Activated naive CD4-positive, alpha-beta T cell treated with anti-CD3 and anti-CD28 coated beads for 36 hours (primary cell): ENCODE measurements at regions of chr15 and their contacts with region 1.

Region 1: GRCh38 chr15:63212050-63213004 is 22.9 kb downstream of the RAB8B start:
- DNase-seq: peak; percentile 29
- H3K4me3 Mint-ChIP-seq: peak overlapping the region; percentile 57
- H3K27ac Mint-ChIP-seq: peak overlapping the region; percentile 97
- H3K4me1 Mint-ChIP-seq: peaks cover 89% of the 10 kb centered on the region
- H3K27me3 Mint-ChIP-seq: no peaks in the 10 kb centered on the region

Region 2: DNA sequence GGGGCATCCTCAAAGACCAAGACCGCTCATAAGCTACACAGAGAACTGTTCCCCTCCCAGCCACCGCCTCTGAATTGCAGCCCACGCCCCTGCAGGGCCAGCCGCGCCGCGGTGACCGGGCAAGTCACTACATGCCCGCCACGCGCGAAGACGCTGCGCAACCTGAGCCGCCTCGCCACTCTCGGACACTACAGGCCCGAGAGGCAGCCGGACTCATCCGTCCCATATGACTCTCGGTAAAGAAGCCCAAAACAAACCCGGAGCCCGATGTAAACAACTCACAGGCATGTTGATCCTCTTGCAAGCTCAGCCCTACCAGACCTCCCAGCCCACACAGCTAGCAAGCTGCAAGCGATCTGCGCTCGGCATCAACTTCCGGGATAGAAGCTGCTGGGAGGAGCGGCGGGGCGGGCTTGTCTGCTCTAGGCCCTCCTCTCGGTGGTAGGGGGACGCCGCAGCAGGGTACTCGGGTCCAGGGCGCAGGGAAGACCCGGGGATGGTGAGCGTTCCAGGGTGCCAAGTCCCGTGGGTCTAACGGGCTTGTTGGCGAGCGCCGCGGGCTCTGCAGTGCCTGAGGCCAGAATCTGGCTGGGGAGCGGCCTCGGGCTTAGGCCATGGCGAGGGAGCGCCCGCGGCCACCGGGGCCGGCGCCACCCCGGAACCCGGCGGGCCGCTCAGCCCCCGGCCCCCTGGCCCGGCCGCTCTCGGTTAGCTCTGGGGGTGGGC is 55.0 kb before region 1 on chr15 and contains the start of gene RPS27L:
- CTCF ChIA-PET with region 1: interaction called, 3 read pairs
- intact Hi-C with region 1: loop called (anchors 5 kb)
- DNase-seq: peak; percentile 93
- H3K4me3 Mint-ChIP-seq: peak within 1 kb of the TSS; percentile 99
- H3K27ac Mint-ChIP-seq: peak within 1 kb of the TSS; percentile 98
- H3K4me1 Mint-ChIP-seq: peaks cover 18% of the 10 kb centered on the region
- H3K27me3 Mint-ChIP-seq: no peaks in the 10 kb centered on the region
- total RNA-seq, gene RPS27L: 220 to 222 TPM

Region 3: GRCh38 chr15:63172376-63173109 is 39.8 kb before region 1 on chr15:
- CTCF ChIA-PET with region 1: no interaction called
- intact Hi-C with region 1: loop called (anchors 1 kb)
- DNase-seq: no peak
- H3K4me3 Mint-ChIP-seq: no peak overlapping the region
- H3K27ac Mint-ChIP-seq: no peak overlapping the region
- H3K4me1 Mint-ChIP-seq: peaks cover 14% of the 10 kb centered on the region
- H3K27me3 Mint-ChIP-seq: no peaks in the 10 kb centered on the region

Region 4: GRCh38 chr15:63232405-63232804 is 20.1 kb after region 1 on chr15:
- CTCF ChIA-PET with region 1: interaction called, 4 read pairs
- intact Hi-C with region 1: loop called (anchors 1 kb)
- DNase-seq: no peak
- H3K4me3 Mint-ChIP-seq: no peak overlapping the region
- H3K27ac Mint-ChIP-seq: peak overlapping the region; percentile 52
- H3K4me1 Mint-ChIP-seq: peaks cover 81% of the 10 kb centered on the region
- H3K27me3 Mint-ChIP-seq: no peaks in the 10 kb centered on the region

Region 5: DNA sequence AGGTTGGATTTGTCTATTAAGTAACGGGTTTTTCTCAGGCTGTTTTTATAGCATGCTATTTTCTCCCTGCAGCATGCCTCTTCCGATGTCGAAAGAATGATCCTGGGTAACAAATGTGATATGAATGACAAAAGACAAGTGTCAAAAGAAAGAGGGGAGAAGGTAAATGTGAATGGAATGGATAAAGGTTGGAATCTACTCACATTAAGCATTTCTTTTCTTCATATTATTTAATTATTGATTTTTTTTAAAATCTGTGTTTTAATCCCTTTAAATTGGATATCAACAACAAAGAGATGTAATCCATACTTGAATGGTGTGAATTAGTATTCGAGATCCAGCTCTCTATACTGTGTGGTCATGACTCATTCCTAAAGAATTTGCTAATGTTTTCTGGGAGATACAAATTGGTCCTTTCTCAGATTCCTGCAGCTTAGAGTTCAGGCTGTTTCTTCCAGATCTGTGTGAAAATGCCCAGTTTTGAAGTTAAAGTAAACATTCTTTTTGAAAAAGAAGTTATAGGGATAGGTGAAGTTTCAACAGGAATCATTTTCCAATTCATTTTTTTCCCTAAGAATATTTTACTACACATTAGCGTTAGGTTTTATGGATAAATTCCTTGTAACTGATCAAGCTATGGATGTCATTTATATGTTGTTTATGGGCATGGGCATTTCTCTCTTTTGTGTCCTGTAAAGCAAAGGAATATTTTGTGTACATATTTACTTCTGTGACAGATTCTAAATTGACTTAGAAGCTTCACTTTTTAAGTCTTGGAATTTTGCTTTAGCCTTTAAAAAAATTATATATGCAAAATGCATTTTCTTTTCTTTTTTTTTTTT is 44.3 kb after region 1 on chr15:
- CTCF ChIA-PET with region 1: no interaction called
- intact Hi-C with region 1: no loop called
- DNase-seq: no peak
- H3K4me3 Mint-ChIP-seq: no peak overlapping the region
- H3K27ac Mint-ChIP-seq: no peak overlapping the region
- H3K4me1 Mint-ChIP-seq: peaks cover 12% of the 10 kb centered on the region
- H3K27me3 Mint-ChIP-seq: no peaks in the 10 kb centered on the region

Region 6: DNA sequence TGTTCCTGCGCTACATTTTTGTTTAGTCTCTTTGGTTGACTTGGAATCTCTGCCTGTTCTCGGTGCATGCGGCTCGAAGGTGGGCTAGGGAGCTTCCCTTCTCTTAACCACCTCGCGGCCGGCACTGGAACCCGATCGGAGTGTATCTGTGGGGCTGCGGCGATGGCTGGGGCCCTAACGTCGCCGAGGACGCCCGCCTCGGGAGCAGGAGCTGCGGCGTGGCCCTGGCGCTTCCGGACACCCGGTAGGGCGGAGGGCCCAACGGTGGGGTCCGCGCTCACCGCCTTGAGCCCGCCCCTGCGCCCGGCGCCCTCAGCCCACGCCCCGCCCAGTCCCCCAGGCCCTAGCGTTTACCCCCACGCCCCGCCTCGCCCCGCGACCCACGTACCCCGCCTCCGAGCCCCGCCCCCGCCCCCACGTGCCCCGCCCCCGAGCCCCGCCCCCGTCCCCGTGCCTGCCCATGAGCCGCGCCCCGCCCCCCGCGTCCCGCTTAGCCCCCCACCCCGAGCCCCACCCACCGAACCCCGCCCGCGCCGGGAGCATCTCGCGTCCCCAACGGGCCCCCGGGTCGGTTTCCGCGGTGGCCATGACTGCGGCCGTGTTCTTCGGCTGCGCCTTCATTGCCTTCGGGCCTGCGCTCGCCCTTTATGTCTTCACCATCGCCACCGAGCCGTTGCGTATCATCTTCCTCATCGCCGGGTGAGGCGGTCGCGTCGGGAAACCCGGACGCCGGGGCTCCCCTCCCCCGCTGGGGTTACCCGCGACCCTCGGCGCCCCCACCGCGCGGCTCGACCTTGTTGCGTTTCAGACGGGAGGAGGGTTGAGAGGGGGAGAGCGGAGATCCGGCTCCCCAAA is 64.9 kb after region 1 on chr15 and contains the start of gene APH1B:
- CTCF ChIA-PET with region 1: interaction called, 4 read pairs
- intact Hi-C with region 1: loop called (anchors 2 kb)
- DNase-seq: peak; percentile 63
- H3K4me3 Mint-ChIP-seq: peak within 1 kb of the TSS; percentile 89
- H3K27ac Mint-ChIP-seq: peak within 1 kb of the TSS; percentile 75
- H3K4me1 Mint-ChIP-seq: peaks cover 33% of the 10 kb centered on the region
- H3K27me3 Mint-ChIP-seq: no peaks in the 10 kb centered on the region
- total RNA-seq, gene APH1B: 6.7 to 8.6 TPM

Region 7: GRCh38 chr15:63374686-63375520 is 162.6 kb after region 1 on chr15:
- CTCF ChIA-PET with region 1: no interaction called
- intact Hi-C with region 1: loop called (anchors 10 kb)
- DNase-seq: peak; percentile 31
- H3K4me3 Mint-ChIP-seq: no peak overlapping the region
- H3K27ac Mint-ChIP-seq: no peak overlapping the region
- H3K4me1 Mint-ChIP-seq: peaks cover 37% of the 10 kb centered on the region
- H3K27me3 Mint-ChIP-seq: peaks cover 24% of the 10 kb centered on the region

Region 8: GRCh38 chr15:63473999-63474809 is 261.9 kb after region 1 on chr15:
- CTCF ChIA-PET with region 1: no interaction called
- intact Hi-C with region 1: loop called (anchors 2 kb)
- DNase-seq: peak; percentile 88
- H3K4me3 Mint-ChIP-seq: no peak overlapping the region
- H3K27ac Mint-ChIP-seq: peak overlapping the region; percentile 89
- H3K4me1 Mint-ChIP-seq: peaks cover 53% of the 10 kb centered on the region
- H3K27me3 Mint-ChIP-seq: no peaks in the 10 kb centered on the region

Region 9: DNA sequence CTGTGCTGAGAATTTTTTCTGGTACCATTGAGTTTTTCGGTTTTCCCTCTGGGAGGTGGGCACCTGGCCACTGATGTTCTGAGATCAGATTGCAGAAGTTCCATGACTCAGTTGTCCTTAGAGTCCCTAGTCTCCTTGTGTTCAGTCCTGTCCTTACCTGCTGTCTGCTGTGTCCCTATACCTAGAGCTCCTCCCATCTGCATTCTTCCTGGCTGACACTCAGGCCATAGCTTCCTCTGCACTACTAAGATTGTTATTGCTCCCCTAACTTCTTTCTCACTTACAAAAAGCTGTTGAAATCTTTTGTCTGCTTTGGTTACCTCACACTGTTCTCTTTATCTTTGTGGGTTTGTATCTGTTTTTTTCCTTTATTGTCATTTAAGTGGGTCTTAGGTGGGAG is 305.3 kb after region 1 on chr15:
- CTCF ChIA-PET with region 1: no interaction called
- intact Hi-C with region 1: no loop called
- DNase-seq: no peak
- H3K4me3 Mint-ChIP-seq: peak overlapping the region; percentile 11
- H3K27ac Mint-ChIP-seq: peak overlapping the region; percentile 46
- H3K4me1 Mint-ChIP-seq: peaks cover 86% of the 10 kb centered on the region
- H3K27me3 Mint-ChIP-seq: no peaks in the 10 kb centered on the region